ENCODE measurements at regions of chr3 and their contacts with region 1.

Region 1: DNA sequence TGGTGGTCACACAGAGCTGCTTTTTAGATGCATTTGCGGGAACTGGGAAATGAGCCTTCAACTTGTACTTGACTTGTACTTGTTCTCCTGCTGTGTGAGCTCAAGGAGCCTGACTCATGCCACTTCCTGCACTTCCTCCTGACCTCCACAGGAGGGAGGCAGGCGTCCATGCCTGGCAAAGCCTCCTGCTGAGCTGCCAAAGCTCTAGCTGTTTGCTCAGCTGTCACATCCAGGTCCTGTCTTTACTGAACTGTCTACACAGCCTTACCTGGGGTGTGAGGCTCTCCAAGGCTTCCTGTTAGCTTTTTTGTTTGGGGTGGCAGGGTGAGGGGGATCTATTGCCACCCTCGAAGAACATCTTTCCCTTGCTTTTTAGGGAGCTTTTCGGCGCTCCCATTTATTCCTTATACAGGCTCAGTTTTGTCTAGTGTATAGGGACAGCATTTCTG is 6.4 kb downstream of the THPO start:
- DNase-seq: peak; percentile 62 to 94 (median 82)

Region 2: DNA sequence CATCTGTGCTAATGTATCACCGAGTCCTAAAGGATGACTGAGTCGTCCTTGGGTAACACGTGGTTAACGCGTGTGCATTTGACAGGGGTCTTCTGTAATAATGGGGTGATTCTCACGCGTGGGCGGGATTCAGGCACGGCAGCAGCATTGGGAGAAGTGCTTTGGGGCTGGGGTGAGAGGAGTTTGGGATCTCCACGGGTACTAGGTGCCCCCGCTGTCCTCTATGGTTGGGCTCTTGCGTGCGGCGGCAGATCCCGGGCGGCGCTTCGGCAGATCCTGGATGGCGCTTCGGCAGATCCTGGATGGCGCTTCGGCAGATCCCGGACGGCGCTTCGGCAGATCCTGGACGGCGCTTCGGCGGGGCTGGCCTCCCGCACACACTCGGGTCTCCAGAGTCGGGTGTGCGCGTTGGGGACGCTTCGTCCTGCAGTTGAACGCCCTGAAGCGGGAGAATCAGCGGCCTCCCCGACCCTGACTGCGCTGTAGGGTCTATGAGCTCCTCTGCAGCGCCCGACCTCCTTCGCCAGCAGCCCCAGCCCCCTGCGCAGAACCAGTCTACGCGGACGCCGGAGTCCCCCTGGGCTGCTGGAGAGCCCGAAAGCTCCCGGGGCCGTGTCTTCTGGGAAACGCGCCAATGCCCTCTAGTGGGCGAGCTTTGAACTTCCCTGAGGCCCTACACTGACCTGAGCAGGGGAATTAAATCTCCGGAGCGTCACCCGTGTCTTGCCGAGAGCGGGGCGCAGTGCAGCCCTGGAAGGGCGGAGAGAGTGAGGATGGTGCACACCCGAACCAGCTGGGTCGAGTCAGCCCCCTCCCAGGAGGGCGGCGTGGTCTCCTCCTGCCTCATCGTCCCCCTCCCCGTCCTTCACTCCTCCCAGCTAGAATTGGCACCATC is 141.9 kb after region 1 on chr3:
- intact Hi-C with region 1: loop called (anchors 10 kb)
- DNase-seq: peak; percentile 69 to 93 (median 86)

Region 3: GRCh38 chr3:184543843-184544512 is 172.4 kb after region 1 on chr3:
- intact Hi-C with region 1: loop called (anchors 5 kb)
- DNase-seq: peak; percentile 49 to 91 (median 78)

Region 4: DNA sequence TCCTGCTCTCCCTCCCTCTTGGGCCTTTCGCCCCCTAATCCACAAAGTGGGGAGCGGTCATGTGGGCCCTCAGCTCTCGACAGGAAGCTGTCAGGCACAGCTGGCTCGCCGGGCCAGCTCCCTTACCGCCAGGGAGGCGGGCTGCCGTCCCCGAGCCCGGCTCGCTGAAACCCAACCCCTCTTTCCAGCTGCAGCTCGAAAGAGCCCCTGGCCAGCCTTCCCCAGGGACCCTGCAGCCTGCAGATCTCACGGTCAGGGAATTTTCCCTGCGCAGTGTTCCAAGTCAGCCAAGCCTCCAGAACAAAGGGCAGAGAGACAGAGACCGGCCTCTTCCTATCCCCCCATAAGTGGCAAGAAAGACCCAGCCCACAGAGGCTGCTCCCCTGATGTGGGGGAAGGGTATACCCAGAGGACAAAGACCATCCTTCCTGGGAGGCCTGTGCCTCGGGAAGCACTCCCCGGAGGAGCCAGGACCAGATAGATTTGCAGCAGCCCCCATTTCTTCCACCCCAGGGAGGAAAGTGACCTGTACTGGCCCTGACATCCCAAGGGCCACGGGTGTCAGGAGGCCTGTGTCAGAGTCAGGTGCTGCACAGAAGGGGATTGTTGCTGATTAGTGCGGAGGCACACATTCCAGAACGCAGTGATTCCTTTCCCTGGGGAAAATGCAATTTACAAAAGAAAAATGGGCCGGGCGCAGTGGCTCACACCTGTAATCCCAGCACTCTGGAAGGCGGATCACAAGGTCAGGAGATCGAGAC is 307.6 kb after region 1 on chr3:
- intact Hi-C with region 1: no loop called
- DNase-seq: peak in 2 of 42 donors; percentile 21 to 22